Activated naive CD4-positive, alpha-beta T cell treated with anti-CD3 and anti-CD28 coated beads for 36 hours (primary cell): ENCODE measurements at regions of chr12 and their contacts with region 1.

Region 1: DNA sequence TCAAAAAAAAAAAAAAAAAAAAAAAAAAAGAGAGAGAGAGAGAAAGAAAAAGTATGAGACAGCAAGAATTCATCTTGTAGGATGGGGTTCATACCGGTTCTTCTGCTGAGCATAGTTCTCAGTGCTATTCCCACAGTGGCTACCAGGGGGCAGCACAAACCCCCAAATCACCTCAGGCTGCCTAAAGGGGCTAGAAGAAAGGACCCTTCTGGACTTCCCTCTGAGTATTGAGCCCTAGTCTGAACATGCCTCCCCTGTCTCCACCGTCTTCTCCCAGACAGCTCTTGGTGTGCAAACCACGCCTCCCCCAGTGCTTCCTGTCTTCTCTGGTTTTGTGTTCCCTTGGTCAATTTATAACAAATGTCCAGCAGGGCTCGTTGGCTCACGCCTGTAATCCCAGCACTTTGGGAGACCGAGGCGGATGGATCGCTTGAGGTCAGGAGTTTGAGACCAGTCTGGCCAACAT is 31.3 kb upstream of the SMUG1 start:
- DNase-seq: peak; percentile 84
- H3K4me3 Mint-ChIP-seq: no peak overlapping the region
- H3K27ac Mint-ChIP-seq: no peak overlapping the region
- H3K4me1 Mint-ChIP-seq: peaks cover 19% of the 10 kb centered on the region
- H3K27me3 Mint-ChIP-seq: peaks cover 4% of the 10 kb centered on the region

Region 2: DNA sequence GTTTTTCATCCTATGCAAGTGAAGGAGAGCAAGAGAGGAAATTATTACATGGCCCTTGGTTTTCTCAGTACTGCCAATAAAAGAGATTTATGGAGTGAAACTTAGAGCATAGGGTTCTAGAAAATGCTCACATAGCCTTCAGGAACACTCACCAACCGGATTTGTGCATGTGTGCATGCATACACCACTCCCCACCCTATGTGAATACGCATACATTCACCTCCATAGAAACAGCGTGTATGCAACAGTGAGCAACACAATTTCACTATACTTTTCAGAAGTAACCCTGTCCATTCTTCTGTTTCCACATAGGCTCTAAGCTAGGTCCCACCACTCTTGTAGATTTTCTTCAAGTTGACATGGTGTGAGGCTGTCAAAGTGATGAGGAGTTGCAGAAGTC is 313.0 kb before region 1 on chr12:
- CTCF ChIA-PET with region 1: no interaction called
- intact Hi-C with region 1: no loop called
- DNase-seq: no peak
- H3K4me3 Mint-ChIP-seq: no peak overlapping the region
- H3K27ac Mint-ChIP-seq: no peak overlapping the region
- H3K4me1 Mint-ChIP-seq: no peaks in the 10 kb centered on the region
- H3K27me3 Mint-ChIP-seq: peaks cover 24% of the 10 kb centered on the region

Region 3: DNA sequence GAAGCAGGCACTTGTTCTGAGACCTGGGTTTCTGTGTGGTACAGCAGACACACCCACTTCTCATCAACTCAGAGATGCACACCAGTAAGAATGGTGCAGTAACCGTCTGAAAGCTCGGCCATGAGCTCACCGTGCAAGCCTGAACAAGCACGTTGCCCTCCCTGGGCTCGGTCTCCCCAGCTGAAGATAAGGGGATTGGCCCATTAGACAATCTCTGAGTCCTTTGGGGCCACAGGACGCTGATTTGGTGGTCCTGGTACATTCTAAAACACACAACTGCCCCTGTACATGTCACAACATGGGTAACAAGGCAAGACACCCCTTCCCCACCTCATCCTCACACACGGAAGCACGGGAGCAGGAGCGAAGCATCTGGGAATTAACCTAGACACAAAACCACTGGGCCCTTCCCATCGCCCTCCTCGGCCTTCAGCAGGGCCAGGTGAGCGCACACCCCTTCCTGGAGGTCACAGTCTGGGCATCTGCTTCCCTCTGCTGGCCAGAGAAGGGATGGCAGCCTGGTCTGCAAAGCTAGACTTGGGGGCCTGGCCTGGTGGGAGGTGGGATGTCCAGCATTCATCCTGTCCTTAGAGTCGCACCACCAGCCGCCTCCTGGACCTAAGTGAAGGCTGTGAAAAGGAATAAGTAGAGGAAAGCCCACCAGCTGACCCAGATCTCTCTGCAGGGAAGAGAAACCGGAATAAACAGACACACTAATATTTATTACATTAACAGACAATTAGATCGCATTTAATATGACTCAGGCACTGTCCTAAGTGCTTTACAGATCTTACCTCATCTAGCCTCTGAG is 12.4 kb before region 1 on chr12:
- CTCF ChIA-PET with region 1: interaction called, 40 read pairs
- intact Hi-C with region 1: no loop called
- DNase-seq: peak; percentile 88
- H3K4me3 Mint-ChIP-seq: no peak overlapping the region
- H3K27ac Mint-ChIP-seq: no peak overlapping the region
- H3K4me1 Mint-ChIP-seq: no peaks in the 10 kb centered on the region
- H3K27me3 Mint-ChIP-seq: peaks cover 9% of the 10 kb centered on the region